Ovary (tissue), 10 donors: ENCODE measurements at regions of chr11 and their contacts with region 1.

Region 1: GRCh38 chr11:117199061-117199915 is at the start of gene TAGLN:
- DNase-seq: peak; percentile 86 to 92 (median 88)
- H3K4me3 ChIP-seq: peak within 1 kb of the TSS; percentile 45
- H3K27ac ChIP-seq: peak within 1 kb of the TSS; percentile 66 to 86
- H3K4me1 ChIP-seq: peaks cover 39% of the 10 kb centered on the region
- H3K27me3 ChIP-seq: no peaks in the 10 kb centered on the region
- CTCF ChIP-seq: no peak
- EP300 ChIP-seq: peak; percentile 31
- POLR2A ChIP-seq: peak; percentile 57
- total RNA-seq, gene TAGLN: 491 to 2,646 (median 828) TPM

Region 2: GRCh38 chr11:117217141-117218084 is 18.1 kb after region 1 on chr11:
- intact Hi-C with region 1: loop called in 1 of 4 experiments (anchors 2 kb)
- DNase-seq: peak in 3 of 5 donors; percentile 24 to 37 (median 29)
- H3K4me3 ChIP-seq: no peak overlapping the region
- H3K27ac ChIP-seq: peak overlapping the region; percentile 78 to 86
- H3K4me1 ChIP-seq: peaks cover 44% of the 10 kb centered on the region
- H3K27me3 ChIP-seq: no peaks in the 10 kb centered on the region
- CTCF ChIP-seq: no peak
- EP300 ChIP-seq: peak; percentile 87
- POLR2A ChIP-seq: no peak